ENCODE measurements at regions of chr5 and their contacts with region 1.

Region 1: DNA sequence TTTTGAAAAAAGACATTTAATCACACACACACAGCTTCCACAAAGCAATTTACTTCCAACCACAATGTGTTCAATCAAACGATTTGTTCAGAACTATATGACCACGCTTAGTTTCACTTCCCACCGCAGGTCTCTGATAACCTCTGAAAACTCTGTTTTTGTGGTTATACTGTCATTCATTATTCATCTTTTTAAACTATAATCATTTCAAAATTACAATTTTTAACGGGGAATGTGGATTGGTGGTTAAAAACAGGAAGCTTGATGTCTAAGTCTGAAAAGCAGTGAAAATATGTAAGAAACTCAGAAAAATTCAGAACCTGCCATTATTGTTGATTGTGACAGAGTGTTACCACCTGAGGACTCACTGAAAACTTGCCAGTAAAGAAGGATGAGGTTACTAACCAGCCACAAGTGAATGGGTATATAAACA is 12.7 kb upstream of the TMEM174 start:
- DNase-seq: peak; percentile 89
- ATAC-seq: peak; percentile 91
- H3K4me3 Mint-ChIP-seq: no peak overlapping the region
- H3K27ac Mint-ChIP-seq: no peak overlapping the region
- H3K4me1 Mint-ChIP-seq: peaks cover 36% of the 10 kb centered on the region
- H3K27me3 Mint-ChIP-seq: peaks cover 73% of the 10 kb centered on the region

Region 2: GRCh38 chr5:72847989-72848473 is 312.2 kb before region 1 on chr5:
- CTCF ChIA-PET with region 1: no interaction called
- POLR2A ChIA-PET with region 1: no interaction called
- intact Hi-C with region 1: loop called in 1 of 2 experiments (anchors 1 kb)
- DNase-seq: peak; percentile 92
- ATAC-seq: peak; percentile 88
- H3K4me3 Mint-ChIP-seq: peak overlapping the region; percentile 92
- H3K27ac Mint-ChIP-seq: peak overlapping the region; percentile 97
- H3K4me1 Mint-ChIP-seq: peaks cover 45% of the 10 kb centered on the region
- H3K27me3 Mint-ChIP-seq: no peaks in the 10 kb centered on the region

Region 3: DNA sequence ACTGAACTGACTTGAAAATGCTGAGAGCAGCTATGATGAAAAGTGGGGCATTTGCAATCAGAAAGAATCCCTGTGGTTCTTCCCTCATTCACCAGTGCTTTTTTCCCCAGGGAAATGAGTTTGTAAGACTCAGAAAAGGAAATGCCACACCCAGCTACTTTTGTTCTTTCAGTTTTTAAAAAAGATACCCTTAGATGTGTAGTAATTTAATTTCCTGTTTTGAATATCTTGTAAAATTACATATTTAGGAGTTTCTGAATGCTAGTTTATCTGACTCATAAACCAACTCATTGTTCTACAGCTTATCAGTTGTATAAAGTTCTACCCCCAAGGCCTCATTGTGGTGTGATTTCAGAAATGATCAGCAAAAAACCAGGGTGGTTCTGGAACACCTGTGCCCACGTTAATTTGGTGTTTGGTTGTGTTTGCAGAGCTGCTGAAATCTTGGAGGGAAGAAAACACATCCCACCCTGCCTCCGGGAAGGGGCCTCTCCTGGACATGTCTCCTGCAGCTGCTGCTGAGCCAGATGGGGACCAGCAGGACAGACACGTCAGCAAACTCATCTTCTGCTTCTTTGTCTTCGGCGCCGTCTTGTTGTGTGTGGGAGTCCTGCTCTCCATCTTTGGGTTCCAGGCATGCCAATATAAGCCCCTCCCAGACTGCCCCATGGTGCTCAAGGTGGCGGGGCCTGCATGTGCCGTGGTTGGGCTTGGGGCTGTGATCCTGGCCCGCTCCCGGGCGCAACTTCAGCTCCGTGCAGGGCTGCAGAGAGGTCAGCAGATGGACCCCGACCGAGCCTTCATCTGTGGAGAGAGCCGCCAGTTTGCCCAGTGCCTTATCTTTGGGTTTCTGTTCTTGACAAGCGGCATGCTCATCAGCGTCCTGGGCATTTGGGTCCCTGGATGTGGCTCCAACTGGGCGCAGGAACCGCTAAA is 37.1 kb before region 1 on chr5:
- CTCF ChIA-PET with region 1: no interaction called
- POLR2A ChIA-PET with region 1: no interaction called
- intact Hi-C with region 1: loop called (anchors 1 kb)
- DNase-seq: peak; percentile 17
- ATAC-seq: peak; percentile 66
- H3K4me3 Mint-ChIP-seq: no peak overlapping the region
- H3K27ac Mint-ChIP-seq: no peak overlapping the region
- H3K4me1 Mint-ChIP-seq: peaks cover 21% of the 10 kb centered on the region
- H3K27me3 Mint-ChIP-seq: peaks cover 70% of the 10 kb centered on the region

Region 4: DNA sequence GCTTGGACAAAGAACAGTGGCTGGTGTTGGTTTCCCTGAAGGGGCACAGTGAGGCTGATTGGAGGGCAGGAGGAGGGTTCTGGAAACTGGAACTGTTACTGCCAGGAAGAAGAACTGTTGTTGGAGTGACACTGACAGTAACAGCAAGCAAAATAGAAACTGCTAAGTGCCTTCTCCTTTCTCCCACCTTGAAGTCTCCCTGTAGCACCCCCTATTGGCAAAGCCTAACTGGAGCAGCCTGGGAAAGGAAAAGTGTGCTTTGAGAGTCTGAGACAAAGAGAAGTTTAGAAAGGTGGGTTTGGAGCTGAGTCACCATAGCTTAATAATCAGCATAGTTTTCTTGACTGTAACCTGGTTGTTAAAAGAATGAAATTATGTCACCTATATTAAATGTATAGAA is 10.3 kb after region 1 on chr5:
- CTCF ChIA-PET with region 1: interaction called, 22 read pairs
- POLR2A ChIA-PET with region 1: interaction called, 5 read pairs
- intact Hi-C with region 1: no loop called
- DNase-seq: peak; percentile 43
- ATAC-seq: peak; percentile 57
- H3K4me3 Mint-ChIP-seq: no peak overlapping the region
- H3K27ac Mint-ChIP-seq: no peak overlapping the region
- H3K4me1 Mint-ChIP-seq: no peaks in the 10 kb centered on the region
- H3K27me3 Mint-ChIP-seq: peaks cover 88% of the 10 kb centered on the region

Region 5: GRCh38 chr5:73215891-73216610 is 55.8 kb after region 1 on chr5:
- CTCF ChIA-PET with region 1: interaction called, 3 read pairs
- POLR2A ChIA-PET with region 1: no interaction called
- intact Hi-C with region 1: loop called in 1 of 2 experiments (anchors 1 kb)
- DNase-seq: peak; percentile 84
- ATAC-seq: peak; percentile 82
- H3K4me3 Mint-ChIP-seq: no peak overlapping the region
- H3K27ac Mint-ChIP-seq: no peak overlapping the region
- H3K4me1 Mint-ChIP-seq: peaks cover 14% of the 10 kb centered on the region
- H3K27me3 Mint-ChIP-seq: peaks cover 76% of the 10 kb centered on the region

Region 6: DNA sequence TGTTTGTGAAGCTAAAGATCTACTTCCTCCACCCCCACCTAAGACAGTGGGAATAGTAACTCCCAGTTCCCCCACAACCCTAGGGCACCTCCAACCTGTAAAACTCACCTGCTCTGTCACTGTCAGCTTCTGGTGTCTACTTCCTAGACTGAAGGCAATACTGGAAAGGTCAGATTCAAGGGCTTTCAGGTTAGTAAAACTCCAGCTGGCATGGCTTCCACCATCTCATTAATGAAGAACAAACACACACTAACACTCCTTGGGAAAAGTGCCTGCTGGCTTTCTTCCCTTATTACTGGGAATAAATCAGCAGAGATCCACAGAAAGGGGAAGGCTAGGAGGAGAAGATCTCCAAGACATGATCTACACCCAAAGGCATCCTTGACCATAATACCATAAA is 122.7 kb after region 1 on chr5:
- CTCF ChIA-PET with region 1: no interaction called
- POLR2A ChIA-PET with region 1: no interaction called
- intact Hi-C with region 1: no loop called
- DNase-seq: no peak
- ATAC-seq: no peak
- H3K4me3 Mint-ChIP-seq: no peak overlapping the region
- H3K27ac Mint-ChIP-seq: no peak overlapping the region
- H3K4me1 Mint-ChIP-seq: no peaks in the 10 kb centered on the region
- H3K27me3 Mint-ChIP-seq: peaks cover 41% of the 10 kb centered on the region